Activated CD8-positive, alpha-beta memory T cell treated with anti-CD3 and anti-CD28 coated beads, Interleukin-2, amount 10 ng/mL, durations not matched to agents 7 days and 5 days (primary cell): ENCODE measurements at regions of chr6 and their contacts with region 1.

Region 1: DNA sequence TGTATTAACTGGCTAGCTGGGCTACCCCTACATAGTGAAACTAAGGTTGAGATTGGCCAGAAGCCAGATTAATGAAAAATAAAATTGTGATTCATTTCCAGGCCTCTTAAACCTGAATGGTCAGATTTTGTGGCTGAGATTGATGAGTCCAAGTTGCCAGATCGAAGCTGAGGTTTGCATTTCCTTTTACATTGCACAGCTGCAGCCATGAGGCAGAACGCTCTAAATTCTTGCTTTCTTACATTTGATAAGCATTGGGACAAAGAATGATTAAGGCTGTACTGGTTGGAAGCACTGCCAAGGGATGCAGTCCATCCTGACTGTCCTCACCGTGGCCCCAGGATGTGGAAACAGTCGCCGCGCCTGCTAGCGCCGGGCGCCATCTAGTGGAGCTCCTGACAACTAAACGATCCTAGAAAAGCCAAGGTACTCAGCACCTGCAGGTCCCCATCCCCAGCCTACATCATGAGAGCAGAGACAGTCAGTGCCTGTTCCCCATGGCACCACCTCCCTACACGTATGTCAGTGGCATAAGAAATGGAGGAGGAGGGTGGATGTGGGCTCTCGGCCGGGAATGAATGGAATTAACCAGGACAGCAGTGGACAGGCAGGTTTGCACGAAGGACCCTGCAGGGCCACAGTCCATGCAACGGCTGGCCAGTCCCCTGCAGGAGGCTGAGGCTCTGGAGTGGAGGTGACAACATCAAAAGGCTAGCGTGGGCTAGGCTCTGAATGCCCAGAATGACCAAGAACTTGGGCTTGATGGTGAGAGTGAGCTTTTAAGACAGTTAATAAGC is 19.0 kb downstream of the PXDC1 start:
- DNase-seq: peak; percentile 67
- ATAC-seq: peak; percentile 70
- H3K4me3 Mint-ChIP-seq: no peak overlapping the region
- H3K27ac Mint-ChIP-seq: no peak overlapping the region
- H3K4me1 Mint-ChIP-seq: peaks cover 3% of the 10 kb centered on the region
- H3K27me3 Mint-ChIP-seq: peaks cover 12% of the 10 kb centered on the region

Region 2: DNA sequence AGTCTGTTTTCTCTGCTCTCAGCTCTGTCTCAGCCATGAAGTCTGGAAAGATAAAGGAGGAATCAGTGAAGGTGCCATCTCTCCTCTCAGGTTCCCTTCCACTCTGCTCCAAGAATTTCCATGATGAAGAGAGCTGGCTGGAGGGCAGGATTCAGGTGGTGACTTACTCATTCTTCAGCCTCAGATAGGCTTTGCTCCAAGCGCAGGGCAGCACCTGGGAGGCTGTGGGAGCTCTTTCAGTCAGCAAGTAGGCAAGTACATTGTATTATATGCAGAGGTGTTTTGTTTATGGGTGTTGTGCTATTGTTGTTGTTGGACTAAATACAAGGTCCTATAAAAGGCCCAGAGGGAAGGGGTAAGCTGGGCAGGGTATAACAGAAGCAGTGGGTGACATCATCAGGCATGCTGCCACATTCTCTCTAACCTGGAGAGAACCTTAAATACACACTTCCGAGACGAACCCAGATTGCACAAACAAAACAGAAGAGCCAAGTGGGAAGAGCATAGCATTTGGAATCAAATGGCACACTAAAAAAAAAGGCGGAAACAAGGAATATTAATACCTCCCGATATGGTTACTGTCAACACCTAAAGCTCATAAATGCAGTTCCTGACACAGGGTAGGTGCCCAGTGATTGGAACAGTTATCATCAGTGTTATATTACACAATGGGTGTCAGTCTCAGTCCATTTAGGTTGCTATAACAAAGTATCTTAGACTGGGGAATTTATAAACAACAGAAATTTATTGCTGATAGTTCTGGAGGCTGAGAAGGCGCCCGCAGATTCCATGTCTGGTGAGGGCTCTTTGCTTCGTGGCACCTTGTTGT is 488.3 kb before region 1 on chr6:
- CTCF ChIA-PET with region 1: no interaction called
- DNase-seq: no peak
- ATAC-seq: no peak
- H3K4me3 Mint-ChIP-seq: no peak overlapping the region
- H3K27ac Mint-ChIP-seq: no peak overlapping the region
- H3K4me1 Mint-ChIP-seq: no peaks in the 10 kb centered on the region
- H3K27me3 Mint-ChIP-seq: peaks cover 58% of the 10 kb centered on the region

Region 3: GRCh38 chr6:3281631-3282475 is 450.7 kb before region 1 on chr6:
- CTCF ChIA-PET with region 1: interaction called, 59 read pairs
- DNase-seq: no peak
- ATAC-seq: no peak
- H3K4me3 Mint-ChIP-seq: no peak overlapping the region
- H3K27ac Mint-ChIP-seq: no peak overlapping the region
- H3K4me1 Mint-ChIP-seq: no peaks in the 10 kb centered on the region
- H3K27me3 Mint-ChIP-seq: no peaks in the 10 kb centered on the region

Region 4: GRCh38 chr6:3664625-3665041 is 67.9 kb before region 1 on chr6:
- CTCF ChIA-PET with region 1: no interaction called
- DNase-seq: no peak
- ATAC-seq: no peak
- H3K4me3 Mint-ChIP-seq: no peak overlapping the region
- H3K27ac Mint-ChIP-seq: no peak overlapping the region
- H3K4me1 Mint-ChIP-seq: no peaks in the 10 kb centered on the region
- H3K27me3 Mint-ChIP-seq: peaks cover 13% of the 10 kb centered on the region

Region 5: GRCh38 chr6:3721810-3722626 is 10.5 kb before region 1 on chr6:
- CTCF ChIA-PET with region 1: interaction called, 10 read pairs
- DNase-seq: no peak
- ATAC-seq: no peak
- H3K4me3 Mint-ChIP-seq: no peak overlapping the region
- H3K27ac Mint-ChIP-seq: no peak overlapping the region
- H3K4me1 Mint-ChIP-seq: no peaks in the 10 kb centered on the region
- H3K27me3 Mint-ChIP-seq: peaks cover 5% of the 10 kb centered on the region

Region 6: DNA sequence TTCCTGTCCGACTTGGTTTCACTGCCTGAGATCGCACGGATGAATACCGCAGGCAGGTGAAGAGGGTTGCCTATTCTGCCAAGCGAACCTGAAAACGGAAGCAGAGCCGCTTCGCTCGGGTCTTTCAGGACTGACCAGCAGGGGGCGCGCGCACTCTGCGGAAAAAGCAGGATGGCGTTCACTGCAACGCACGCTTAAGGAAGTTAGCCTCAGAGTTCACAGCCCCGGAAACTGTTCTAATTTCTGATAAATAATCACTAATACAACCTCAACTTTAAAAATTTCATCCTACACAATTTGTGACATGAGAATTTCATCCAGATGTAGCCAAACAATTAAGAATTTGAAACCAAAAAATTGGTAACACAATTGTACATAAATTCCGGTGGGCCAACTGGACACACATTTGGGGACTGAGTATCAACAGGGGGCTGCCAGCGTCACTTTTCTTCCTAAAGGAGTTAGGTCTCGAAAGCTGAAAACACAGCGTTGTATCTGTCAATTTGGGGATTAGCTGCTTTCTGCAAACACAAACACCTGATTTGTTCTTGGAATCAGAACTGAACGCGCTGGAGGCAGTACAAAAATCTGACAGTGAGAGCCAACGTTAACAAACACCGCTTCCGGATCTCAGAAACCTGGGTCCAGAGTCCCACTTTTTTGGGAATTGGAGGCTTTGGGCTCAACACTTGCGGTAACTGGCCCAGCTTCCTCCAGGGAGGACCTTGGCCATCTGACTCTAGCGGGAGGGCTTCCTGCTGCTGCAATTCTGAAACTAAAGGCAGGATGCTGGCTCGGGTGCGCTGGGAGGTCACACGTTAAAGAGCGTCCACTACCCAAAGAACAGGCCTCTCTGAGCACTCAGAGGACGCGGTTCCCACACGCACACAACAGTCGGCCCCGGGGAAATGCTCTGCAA is 10.1 kb after region 1 on chr6:
- CTCF ChIA-PET with region 1: interaction called, 22 read pairs
- DNase-seq: peak; percentile 88
- ATAC-seq: peak; percentile 87
- H3K4me3 Mint-ChIP-seq: no peak overlapping the region
- H3K27ac Mint-ChIP-seq: no peak overlapping the region
- H3K4me1 Mint-ChIP-seq: peaks cover 14% of the 10 kb centered on the region
- H3K27me3 Mint-ChIP-seq: peaks cover 25% of the 10 kb centered on the region

Region 7: GRCh38 chr6:3748208-3749066 is 15.9 kb after region 1 on chr6:
- CTCF ChIA-PET with region 1: interaction called, 22 read pairs
- DNase-seq: peak; percentile 50
- ATAC-seq: peak; percentile 17
- H3K4me3 Mint-ChIP-seq: no peak overlapping the region
- H3K27ac Mint-ChIP-seq: no peak overlapping the region
- H3K4me1 Mint-ChIP-seq: peaks cover 6% of the 10 kb centered on the region
- H3K27me3 Mint-ChIP-seq: peaks cover 48% of the 10 kb centered on the region